Breast epithelium (tissue), 4 donors: ENCODE measurements at regions of chr6 and their contacts with region 1.

Region 1: DNA sequence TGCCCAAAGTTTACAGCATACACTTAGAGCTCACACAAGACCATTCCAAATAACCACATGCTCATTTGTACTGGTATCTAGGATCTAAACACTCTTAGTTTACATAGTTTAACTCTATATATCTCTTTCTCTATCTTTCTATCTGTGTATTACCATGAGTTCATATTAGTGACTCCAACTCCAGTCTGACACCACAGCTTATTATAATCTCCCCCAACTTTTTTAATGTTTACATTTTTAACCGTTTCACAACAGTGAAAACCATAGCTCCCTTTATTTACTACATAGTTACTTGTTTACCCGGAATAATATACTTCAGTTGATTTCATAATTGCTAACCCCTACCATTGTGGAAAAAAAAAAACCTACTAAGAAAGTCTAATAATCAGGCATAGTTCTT is 362.4 kb upstream of the RGS17 start:
- DNase-seq: no peak
- H3K4me3 ChIP-seq: no peak overlapping the region
- H3K27ac ChIP-seq: no peak overlapping the region
- H3K4me1 ChIP-seq: no peaks in the 10 kb centered on the region
- H3K27me3 ChIP-seq: no peaks in the 10 kb centered on the region
- CTCF ChIP-seq: no peak
- POLR2A ChIP-seq: no peak

Region 2: DNA sequence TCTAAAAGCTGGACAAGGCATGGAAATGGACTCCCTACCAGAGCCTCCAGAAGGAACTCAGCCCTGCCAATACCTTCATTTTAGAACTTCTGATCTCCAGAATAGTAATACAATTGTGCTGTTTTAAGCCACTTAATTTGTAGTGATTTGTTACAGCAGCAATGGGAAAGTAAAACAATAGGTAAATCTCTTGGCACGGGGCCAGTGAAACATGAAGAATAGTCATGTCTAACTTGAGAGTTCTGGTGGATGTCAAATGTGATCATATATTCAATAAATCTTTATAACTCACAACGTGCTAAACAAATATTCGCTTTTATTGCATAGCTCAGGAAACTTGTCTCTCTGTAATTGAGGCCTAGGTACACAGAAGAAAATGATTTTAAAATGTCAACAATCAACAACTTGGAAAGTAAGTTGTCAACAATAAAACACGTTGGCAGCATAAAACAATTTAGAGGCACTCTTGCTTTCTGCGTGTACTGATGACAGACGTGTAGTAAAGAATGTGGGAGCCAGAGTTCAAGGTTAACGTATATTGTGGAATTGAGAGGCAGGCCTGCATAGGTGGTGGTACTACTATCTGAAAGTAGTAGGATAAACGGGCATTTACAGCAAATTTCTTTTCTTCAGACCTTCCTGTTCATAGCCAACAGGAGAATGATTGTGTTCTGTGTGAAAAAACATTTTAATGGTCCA is 405.0 kb after region 1 on chr6:
- intact Hi-C with region 1: loop called (anchors 5 kb)
- DNase-seq: no peak
- H3K4me3 ChIP-seq: no peak overlapping the region
- H3K27ac ChIP-seq: no peak overlapping the region
- H3K4me1 ChIP-seq: no peaks in the 10 kb centered on the region
- H3K27me3 ChIP-seq: no peaks in the 10 kb centered on the region
- CTCF ChIP-seq: no peak
- POLR2A ChIP-seq: no peak